H1 (cell line): ENCODE measurements at regions of chr10 and their contacts with region 1.

Region 1: GRCh38 chr10:12195603-12196506 is at the starts of genes CDC123 and NUDT5:
- DNase-seq: peak; percentile 56 to 86
- H3K4me3 ChIP-seq: peak within 1 kb of the TSS; percentile 77 to 96 (median 86)
- H3K27ac ChIP-seq: peak within 1 kb of the TSS; percentile 90
- H3K4me1 ChIP-seq: peaks cover 0 to 1% (median 0%) of the 10 kb centered on the region in 4 experiments; a peak in 2 of 7 replicates
- H3K27me3 ChIP-seq: no peaks in the 10 kb centered on the region
- CTCF ChIP-seq: no peak
- EP300 ChIP-seq: 0 out of 3 replicates have a peak, but pooled peaks of 1 of the 2 experiments have one; percentile 60
- POLR2A ChIP-seq: peak; percentile 68 to 70
- RAD21 ChIP-seq: no peak
- total RNA-seq, gene CDC123: 185 and 202 TPM in 2 replicates
- total RNA-seq, gene NUDT5: 127 and 134 TPM in 2 replicates

Region 2: DNA sequence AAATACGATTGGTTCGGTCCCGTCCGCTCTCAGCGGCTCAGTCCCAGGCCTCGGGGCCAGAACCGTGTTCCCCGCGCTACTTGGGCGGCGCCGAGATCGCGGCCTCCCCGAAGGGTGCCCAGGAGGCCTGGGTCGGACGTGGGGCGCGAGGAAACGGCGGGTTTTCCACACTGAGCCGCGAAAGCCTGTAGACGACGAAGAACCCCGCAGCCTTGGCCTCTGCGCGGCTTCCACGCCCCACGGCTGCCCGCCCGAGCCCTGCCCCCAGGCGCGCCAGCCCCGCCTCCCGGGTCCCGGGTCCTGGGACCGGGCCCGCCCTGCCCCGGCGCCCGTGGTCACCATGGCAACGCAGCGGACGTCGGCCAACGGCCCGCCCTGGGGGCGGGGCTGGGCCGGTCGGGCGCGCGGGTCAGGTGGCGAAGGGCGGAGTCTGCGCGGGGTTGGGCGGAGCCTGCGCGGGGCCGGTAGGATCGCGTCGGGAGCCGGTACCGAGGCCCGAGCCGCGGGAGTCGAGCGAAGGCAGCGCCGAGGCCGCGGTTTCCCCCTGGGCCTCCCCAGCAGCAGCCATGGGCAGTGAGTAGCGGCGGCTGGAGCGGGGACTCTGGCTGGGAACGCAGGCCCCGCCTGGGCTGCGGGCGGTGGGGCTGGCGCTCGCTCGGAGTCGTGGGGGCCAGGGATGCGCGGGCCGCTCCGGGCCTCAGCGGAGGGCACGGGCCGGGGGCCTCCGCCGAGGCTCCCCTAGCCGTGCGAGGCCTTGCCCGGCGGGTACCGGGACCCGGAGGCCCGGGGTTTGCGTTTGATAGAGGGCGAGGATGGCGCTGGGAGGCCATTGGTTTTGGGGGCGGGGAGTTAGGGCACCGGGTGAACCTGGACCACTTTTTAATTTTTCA is 66.4 kb before region 1 on chr10 and contains the start of gene SEC61A2:
- CTCF ChIA-PET with region 1: no interaction called
- POLR2A ChIA-PET with region 1: interaction called, 10 read pairs
- DNase-seq: peak; percentile 56 to 98
- H3K4me3 ChIP-seq: peak within 1 kb of the TSS; percentile 73 to 94 (median 79)
- H3K27ac ChIP-seq: peak within 1 kb of the TSS; percentile 73; the same call in 1 of the 2 replicates
- H3K4me1 ChIP-seq: peaks cover 0 to 4% (median 0%) of the 10 kb centered on the region in 4 experiments; a peak in 1 of 7 replicates
- H3K27me3 ChIP-seq: no peaks in the 10 kb centered on the region
- CTCF ChIP-seq: no peak
- EP300 ChIP-seq: no peak
- POLR2A ChIP-seq: no peak; a peak in 2 of 3 replicates
- RAD21 ChIP-seq: no peak
- total RNA-seq, gene SEC61A2: 14.5 and 18.2 TPM in 2 replicates

Region 3: DNA sequence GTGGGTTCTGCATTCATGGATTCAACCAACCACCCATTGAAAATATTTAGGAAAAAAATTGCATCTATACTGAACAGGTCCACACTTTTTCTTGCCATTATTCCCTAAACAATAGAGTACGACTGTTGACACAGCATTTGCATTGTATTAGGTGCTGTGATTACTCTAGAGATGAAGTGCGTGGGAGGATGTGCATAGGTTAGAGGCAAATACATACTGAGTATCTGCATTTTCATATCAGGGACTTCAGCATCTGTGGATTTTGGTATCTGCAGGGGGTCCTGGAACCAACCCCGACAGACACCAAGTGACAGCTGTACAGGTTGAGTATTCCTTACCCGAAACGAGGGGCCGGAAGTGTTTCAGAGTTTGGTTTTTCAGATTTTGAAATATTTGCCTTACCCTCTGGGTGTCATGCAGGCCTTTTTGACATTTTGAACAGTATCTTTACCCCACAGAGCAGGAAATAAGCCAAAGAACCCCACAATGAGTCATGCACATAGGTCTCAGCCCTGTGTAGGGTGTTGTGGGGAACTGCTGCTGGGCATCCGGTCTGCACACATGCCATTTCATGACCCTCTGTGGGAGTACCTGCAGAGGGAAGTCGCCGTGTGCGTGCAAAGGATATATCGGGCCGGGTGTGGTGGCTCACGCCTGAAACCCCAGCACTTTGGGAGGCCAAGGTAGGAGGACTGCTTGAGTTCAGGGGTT is 14.6 kb before region 1 on chr10:
- CTCF ChIA-PET with region 1: interaction called, 5 read pairs
- POLR2A ChIA-PET with region 1: interaction called, 28 read pairs
- DNase-seq: no peak
- H3K4me3 ChIP-seq: peak overlapping the region in 1 of 4 experiments; percentile 5; a peak in 1 of 8 replicates
- H3K27ac ChIP-seq: no peak overlapping the region
- H3K4me1 ChIP-seq: peaks cover 3 to 17% (median 11%) of the 10 kb centered on the region in 4 experiments; a peak in 5 of 7 replicates
- H3K27me3 ChIP-seq: no peaks in the 10 kb centered on the region
- CTCF ChIP-seq: no peak
- EP300 ChIP-seq: no peak
- POLR2A ChIP-seq: no peak
- RAD21 ChIP-seq: no peak